CD8-positive, alpha-beta T cell (primary cell): ENCODE measurements at regions of chr5 and their contacts with region 1.

Region 1: GRCh38 chr5:124683917-124684561 is 62.4 kb downstream of the ZNF608 start:
- DNase-seq: no peak
- ATAC-seq: no peak
- H3K4me3 ChIP-seq: no peak overlapping the region
- H3K4me3 Mint-ChIP-seq: no peak overlapping the region
- H3K27ac ChIP-seq: no peak overlapping the region
- H3K27ac Mint-ChIP-seq: no peak overlapping the region
- H3K4me1 ChIP-seq: no peaks in the 10 kb centered on the region
- H3K4me1 Mint-ChIP-seq: no peaks in the 10 kb centered on the region
- H3K27me3 ChIP-seq: no peaks in the 10 kb centered on the region
- H3K27me3 Mint-ChIP-seq: peaks cover 2% of the 10 kb centered on the region
- CTCF ChIP-seq: no peak

Region 2: GRCh38 chr5:125176009-125176477 is 492.0 kb after region 1 on chr5:
- CTCF ChIA-PET with region 1: no interaction called
- POLR2A ChIA-PET with region 1: no interaction called
- intact Hi-C with region 1: no loop called
- DNase-seq: no peak
- ATAC-seq: no peak
- H3K4me3 ChIP-seq: no peak overlapping the region
- H3K4me3 Mint-ChIP-seq: no peak overlapping the region
- H3K27ac ChIP-seq: no peak overlapping the region
- H3K27ac Mint-ChIP-seq: no peak overlapping the region
- H3K4me1 ChIP-seq: no peaks in the 10 kb centered on the region
- H3K4me1 Mint-ChIP-seq: no peaks in the 10 kb centered on the region
- H3K27me3 ChIP-seq: no peaks in the 10 kb centered on the region
- H3K27me3 Mint-ChIP-seq: no peaks in the 10 kb centered on the region
- CTCF ChIP-seq: no peak

Region 3: DNA sequence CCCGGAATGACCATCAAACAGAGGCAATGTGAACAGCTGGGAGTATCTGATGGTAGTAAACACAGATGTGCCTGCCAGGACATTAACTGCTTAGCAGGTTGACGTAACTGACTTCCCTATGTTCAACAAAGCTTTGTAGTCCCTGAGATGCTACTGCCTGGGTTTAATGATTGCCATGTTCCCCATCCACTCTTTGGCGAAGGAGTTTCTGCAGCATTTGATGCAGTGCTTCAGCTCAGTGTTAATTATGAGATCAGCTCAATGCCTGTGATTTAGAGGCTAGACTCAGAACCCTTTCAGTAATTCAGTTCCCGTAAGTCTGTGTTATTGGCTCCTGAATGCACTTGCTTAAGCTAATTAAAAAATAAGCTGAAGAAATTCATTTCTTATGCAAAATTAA is 609.7 kb after region 1 on chr5:
- CTCF ChIA-PET with region 1: no interaction called
- POLR2A ChIA-PET with region 1: no interaction called
- intact Hi-C with region 1: loop called in 1 of 2 experiments (anchors 5 kb)
- DNase-seq: no peak
- ATAC-seq: no peak
- H3K4me3 ChIP-seq: no peak overlapping the region
- H3K4me3 Mint-ChIP-seq: no peak overlapping the region
- H3K27ac ChIP-seq: no peak overlapping the region
- H3K27ac Mint-ChIP-seq: no peak overlapping the region
- H3K4me1 ChIP-seq: no peaks in the 10 kb centered on the region
- H3K4me1 Mint-ChIP-seq: no peaks in the 10 kb centered on the region
- H3K27me3 ChIP-seq: no peaks in the 10 kb centered on the region
- H3K27me3 Mint-ChIP-seq: no peaks in the 10 kb centered on the region
- CTCF ChIP-seq: no peak